HEK293T (cell line): ENCODE measurements at regions of chr1 and their contacts with region 1.

Region 1: GRCh38 chr1:175023043-175023921 is at the start of gene MRPS14:
- DNase-seq: peak; percentile 98

Region 2: GRCh38 chr1:174999216-174999925 is 23.9 kb before region 1 on chr1:
- CTCF ChIA-PET with region 1: no interaction called
- POLR2A ChIA-PET with region 1: interaction called, 43 read pairs
- DNase-seq: peak; percentile 94

Region 3: GRCh38 chr1:175124861-175125260 is 101.6 kb after region 1 on chr1:
- CTCF ChIA-PET with region 1: interaction called, 18 read pairs
- POLR2A ChIA-PET with region 1: interaction called, 4 read pairs
- DNase-seq: no peak

Region 4: GRCh38 chr1:175146529-175147213 is 123.4 kb after region 1 on chr1:
- CTCF ChIA-PET with region 1: interaction called, 15 read pairs
- POLR2A ChIA-PET with region 1: interaction called, 5 read pairs
- DNase-seq: peak; percentile 88